Panc1 (cell line): ENCODE measurements at regions of chr4 and their contacts with region 1.

Region 1: GRCh38 chr4:99894161-99894997 is at the start of gene LAMTOR3:
- DNase-seq: peak; percentile 36
- ATAC-seq: peak; percentile 100
- H3K4me3 ChIP-seq: peak within 1 kb of the TSS; percentile 78 to 91
- H3K27ac ChIP-seq: peak within 1 kb of the TSS; percentile 88
- H3K4me1 ChIP-seq: no peaks in the 10 kb centered on the region; the same call in 1 of the 2 replicates
- H3K27me3 ChIP-seq: no peaks in the 10 kb centered on the region
- CTCF ChIP-seq: no peak
- total RNA-seq, gene LAMTOR3: 20.3 TPM

Region 2: GRCh38 chr4:99606716-99607115 is 287.7 kb before region 1 on chr4:
- CTCF ChIA-PET with region 1: no interaction called
- POLR2A ChIA-PET with region 1: no interaction called
- in situ Hi-C with region 1: no loop called
- intact Hi-C with region 1: no loop called
- DNase-seq: no peak
- ATAC-seq: no peak
- H3K4me3 ChIP-seq: no peak overlapping the region
- H3K27ac ChIP-seq: no peak overlapping the region
- H3K4me1 ChIP-seq: no peaks in the 10 kb centered on the region
- H3K27me3 ChIP-seq: no peaks in the 10 kb centered on the region
- CTCF ChIP-seq: no peak

Region 3: GRCh38 chr4:99949034-99949998 is 54.9 kb after region 1 on chr4:
- CTCF ChIA-PET with region 1: no interaction called
- POLR2A ChIA-PET with region 1: interaction called, 6 read pairs
- in situ Hi-C with region 1: no loop called
- intact Hi-C with region 1: loop called (anchors 10 kb)
- DNase-seq: peak; percentile 84
- ATAC-seq: peak; percentile 24; the same call in 1 of the 2 replicates
- H3K4me3 ChIP-seq: peak overlapping the region; percentile 90
- H3K27ac ChIP-seq: peak overlapping the region; percentile 85
- H3K4me1 ChIP-seq: peaks cover 11% of the 10 kb centered on the region
- H3K27me3 ChIP-seq: no peaks in the 10 kb centered on the region
- CTCF ChIP-seq: peak; percentile 85

Region 4: GRCh38 chr4:100082852-100083251 is 188.5 kb after region 1 on chr4:
- CTCF ChIA-PET with region 1: no interaction called
- POLR2A ChIA-PET with region 1: no interaction called
- in situ Hi-C with region 1: no loop called
- intact Hi-C with region 1: no loop called
- DNase-seq: no peak
- ATAC-seq: no peak
- H3K4me3 ChIP-seq: no peak overlapping the region
- H3K27ac ChIP-seq: no peak overlapping the region
- H3K4me1 ChIP-seq: no peaks in the 10 kb centered on the region
- H3K27me3 ChIP-seq: no peaks in the 10 kb centered on the region
- CTCF ChIP-seq: no peak

Region 5: DNA sequence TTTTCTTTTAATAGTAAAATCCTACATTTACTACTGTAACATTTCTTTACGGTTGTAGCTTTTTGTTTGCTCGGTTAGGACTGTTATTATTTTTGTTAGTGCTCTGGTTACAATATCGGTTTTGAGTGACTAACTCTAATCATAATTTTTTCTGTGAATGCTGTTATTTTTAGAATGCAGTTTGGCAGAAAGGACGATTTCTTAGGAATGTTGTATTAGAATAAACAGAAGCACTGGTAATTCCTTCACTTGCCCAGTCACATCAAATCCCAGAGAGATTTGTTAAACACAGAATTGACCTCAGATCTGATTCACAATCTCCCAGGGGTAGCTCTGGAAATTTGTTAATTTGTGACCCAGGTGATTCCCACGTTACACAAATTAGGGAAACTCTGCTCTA is 274.1 kb after region 1 on chr4:
- CTCF ChIA-PET with region 1: no interaction called
- POLR2A ChIA-PET with region 1: no interaction called
- in situ Hi-C with region 1: no loop called
- intact Hi-C with region 1: no loop called
- DNase-seq: no peak
- ATAC-seq: no peak
- H3K4me3 ChIP-seq: no peak overlapping the region
- H3K27ac ChIP-seq: no peak overlapping the region
- H3K4me1 ChIP-seq: no peaks in the 10 kb centered on the region
- H3K27me3 ChIP-seq: no peaks in the 10 kb centered on the region
- CTCF ChIP-seq: no peak

Region 6: DNA sequence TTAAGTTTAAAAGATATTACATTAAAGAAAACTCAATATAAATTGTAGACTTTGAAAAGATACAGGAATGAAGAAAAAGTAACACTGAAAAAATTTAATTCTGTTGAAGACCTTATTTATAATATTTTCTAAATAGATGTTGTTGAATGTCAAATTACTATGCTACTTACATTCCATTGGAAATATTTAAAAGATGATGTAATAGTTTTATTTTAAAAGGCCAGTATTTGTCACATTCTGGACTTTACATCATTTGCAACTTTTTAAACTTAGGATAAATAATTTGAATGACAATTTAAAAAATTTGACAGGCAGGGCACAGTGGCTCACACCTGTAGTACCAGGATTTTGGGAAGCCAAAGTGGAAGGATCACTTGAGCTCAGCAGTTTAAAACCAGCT is 288.6 kb after region 1 on chr4:
- CTCF ChIA-PET with region 1: no interaction called
- POLR2A ChIA-PET with region 1: no interaction called
- in situ Hi-C with region 1: no loop called
- intact Hi-C with region 1: no loop called
- DNase-seq: no peak
- ATAC-seq: no peak
- H3K4me3 ChIP-seq: no peak overlapping the region
- H3K27ac ChIP-seq: no peak overlapping the region
- H3K4me1 ChIP-seq: no peaks in the 10 kb centered on the region
- H3K27me3 ChIP-seq: no peaks in the 10 kb centered on the region
- CTCF ChIP-seq: no peak